ENCODE measurements at regions of chr1 and their contacts with region 1.

Region 1: GRCh38 chr1:9494929-9495758 is 44.1 kb upstream of the SLC25A33 start:
- DNase-seq: peak; percentile 48 to 70 (median 64)
- H3K4me3 ChIP-seq: peak overlapping the region in 5 of 7 experiments; percentile 26 to 66 (median 57)
- H3K27ac ChIP-seq: no peak overlapping the region
- H3K4me1 ChIP-seq: peaks cover 0 to 10% (median 6%) of the 10 kb centered on the region in 4 experiments
- H3K27me3 ChIP-seq: peaks cover 0 to 3% (median 0%) of the 10 kb centered on the region in 5 experiments

Region 2: GRCh38 chr1:9270290-9270883 is 224.8 kb before region 1 on chr1:
- CTCF ChIA-PET with region 1: interaction called, 29 read pairs
- POLR2A ChIA-PET with region 1: no interaction called
- DNase-seq: no peak
- H3K4me3 ChIP-seq: no peak overlapping the region
- H3K27ac ChIP-seq: no peak overlapping the region
- H3K4me1 ChIP-seq: peaks cover 0 to 15% (median under 1%) of the 10 kb centered on the region in 4 experiments
- H3K27me3 ChIP-seq: peaks cover 0 to 3% (median 0%) of the 10 kb centered on the region in 5 experiments

Region 3: DNA sequence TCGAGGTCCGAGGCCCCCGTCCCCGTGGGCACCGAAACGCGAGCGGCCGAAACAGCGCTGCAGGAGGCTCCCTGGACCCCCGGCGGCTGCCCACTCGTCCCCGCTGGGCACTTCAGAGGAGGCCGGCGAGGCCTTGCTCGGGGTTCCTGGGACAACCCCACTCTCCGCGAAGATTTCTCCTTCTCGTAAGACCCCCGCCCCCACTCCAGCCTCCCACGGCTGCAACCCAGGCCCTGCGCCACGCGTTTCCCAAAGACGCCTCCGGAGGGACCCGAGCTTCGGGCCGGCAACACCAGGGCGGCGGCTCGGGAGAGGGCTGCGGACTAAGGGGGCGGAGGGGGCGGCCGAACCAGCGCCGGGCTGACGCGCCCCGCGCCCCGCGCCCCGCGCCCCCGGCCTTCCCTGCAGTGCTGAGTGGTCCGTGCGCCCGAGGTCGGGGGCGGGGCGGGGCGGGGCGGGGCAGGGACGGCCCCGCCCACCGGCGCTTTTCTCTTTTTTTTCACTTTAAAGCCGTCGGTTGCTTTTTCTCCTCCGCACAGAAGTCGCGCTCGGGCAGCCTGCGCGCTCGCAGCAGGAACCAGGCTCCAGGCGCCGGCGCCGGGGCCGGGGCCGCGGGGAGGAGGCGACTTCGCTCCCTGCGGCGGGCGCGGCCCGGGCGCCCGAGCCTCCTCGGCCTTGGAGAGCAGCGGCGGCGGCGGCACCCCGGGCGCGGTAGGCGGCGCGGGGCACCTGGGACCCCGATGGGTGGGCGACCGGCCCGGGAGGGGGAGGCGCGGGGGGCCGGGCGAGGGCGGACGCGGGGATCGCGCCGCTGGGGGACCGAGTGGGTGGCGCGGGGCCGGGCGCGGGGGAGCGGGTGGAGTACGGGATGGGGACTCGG is 202.5 kb before region 1 on chr1 and contains the start of gene SPSB1:
- CTCF ChIA-PET with region 1: interaction called, 40 read pairs
- POLR2A ChIA-PET with region 1: no interaction called
- DNase-seq: peak; percentile 74 to 83 (median 81)
- H3K4me3 ChIP-seq: peak within 1 kb of the TSS; percentile 32 to 73 (median 67)
- H3K27ac ChIP-seq: no peak within 1 kb of the TSS
- H3K4me1 ChIP-seq: peaks cover 0 to 27% (median 21%) of the 10 kb centered on the region in 4 experiments
- H3K27me3 ChIP-seq: peaks cover 0 to 32% (median 13%) of the 10 kb centered on the region in 5 experiments

Region 4: DNA sequence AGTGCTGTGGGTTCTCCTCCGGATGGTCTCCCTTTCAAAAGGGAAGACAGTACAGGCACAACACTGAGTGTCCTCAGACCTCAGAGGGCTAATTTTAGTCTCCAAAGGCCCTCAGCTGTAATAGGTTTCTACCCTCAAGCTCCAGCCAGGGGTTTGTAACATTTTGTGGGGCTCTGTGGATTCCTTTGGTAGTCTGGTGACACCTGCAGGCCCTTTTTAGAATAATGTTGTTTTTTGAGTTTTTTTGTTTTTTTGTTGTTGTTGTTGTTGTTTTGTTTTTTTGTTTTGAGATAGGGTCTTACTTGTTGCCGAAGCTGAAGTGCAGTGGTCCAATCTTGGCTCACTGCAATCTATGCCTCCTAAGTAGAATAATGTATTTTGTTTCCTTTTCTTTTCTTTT is 78.6 kb after region 1 on chr1:
- CTCF ChIA-PET with region 1: interaction called, 65 read pairs
- POLR2A ChIA-PET with region 1: no interaction called
- DNase-seq: peak; percentile 31 to 57 (median 52)
- H3K4me3 ChIP-seq: no peak overlapping the region
- H3K27ac ChIP-seq: no peak overlapping the region
- H3K4me1 ChIP-seq: no peaks in the 10 kb centered on the region
- H3K27me3 ChIP-seq: no peaks in the 10 kb centered on the region

Region 5: DNA sequence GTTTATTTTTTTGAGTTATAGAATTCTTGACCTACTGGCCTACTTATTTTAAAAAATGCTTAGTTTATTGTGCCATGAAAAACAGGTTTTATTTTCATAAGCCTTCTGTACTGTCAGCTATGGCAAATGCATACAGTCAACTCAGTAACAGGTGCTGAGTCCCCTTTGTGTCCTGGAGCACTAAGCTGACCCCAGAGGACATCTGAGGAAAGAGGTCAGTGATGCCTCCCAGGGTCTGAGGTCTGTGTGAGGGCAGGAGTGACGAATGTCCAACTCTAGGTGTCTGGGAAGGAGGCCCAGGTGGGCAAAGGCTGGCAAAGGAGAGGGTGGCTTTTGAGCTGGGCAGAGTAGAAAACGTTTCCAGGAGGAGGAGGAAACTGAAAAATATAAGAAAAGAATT is 85.8 kb after region 1 on chr1:
- CTCF ChIA-PET with region 1: interaction called, 65 read pairs
- POLR2A ChIA-PET with region 1: no interaction called
- DNase-seq: no peak
- H3K4me3 ChIP-seq: no peak overlapping the region
- H3K27ac ChIP-seq: no peak overlapping the region
- H3K4me1 ChIP-seq: no peaks in the 10 kb centered on the region
- H3K27me3 ChIP-seq: no peaks in the 10 kb centered on the region